HEK293T (cell line): ENCODE measurements at regions of chr10 and their contacts with region 1.

Region 1: GRCh38 chr10:62681211-62681940 is 123.1 kb upstream of the ADO start:
- DNase-seq: peak; percentile 13

Region 2: GRCh38 chr10:62640411-62640810 is 41.0 kb before region 1 on chr10:
- CTCF ChIA-PET with region 1: interaction called, 18 read pairs
- POLR2A ChIA-PET with region 1: no interaction called
- DNase-seq: no peak